Left ventricle myocardium superior (tissue), 1 donor: ENCODE measurements at regions of chr6 and their contacts with region 1.

Region 1: GRCh38 chr6:155530219-155530834 is 74.7 kb upstream of the NOX3 start:
- DNase-seq: no peak
- ATAC-seq: no peak

Region 2: DNA sequence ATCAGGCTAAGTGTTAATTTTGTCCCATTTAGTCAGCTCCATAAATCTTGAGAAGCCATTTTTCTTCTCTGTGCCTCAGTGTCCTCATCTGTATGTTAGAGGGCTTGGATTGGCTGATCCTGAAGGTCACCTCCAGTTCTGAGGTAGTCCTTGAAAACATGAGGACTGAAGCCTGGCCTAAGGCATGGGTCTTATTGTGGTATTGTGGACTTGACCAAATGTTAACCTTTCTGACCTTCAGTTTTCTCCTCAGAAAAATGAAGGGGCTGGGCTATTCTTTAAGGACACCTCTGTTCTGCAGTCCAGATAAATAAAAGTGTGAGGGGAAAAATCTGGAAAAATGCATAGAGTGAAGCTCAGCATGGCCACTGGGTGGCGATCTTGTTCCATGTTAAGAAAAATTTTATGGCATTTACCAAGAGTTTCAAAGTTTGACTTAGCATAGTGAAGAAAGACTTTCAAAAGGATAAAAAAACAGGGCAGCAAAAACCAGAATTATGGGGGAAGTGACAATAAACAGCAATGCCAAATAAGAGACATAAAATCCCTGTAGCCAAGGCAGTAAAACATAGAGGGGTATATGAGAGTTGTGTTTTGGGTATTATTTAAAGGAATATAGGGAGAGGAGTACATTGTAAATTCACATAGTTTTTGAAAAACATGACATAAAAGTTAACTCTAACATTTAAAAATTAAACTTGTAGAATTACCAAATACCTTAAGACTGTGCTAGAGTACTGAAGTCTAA is 202.8 kb before region 1 on chr6:
- intact Hi-C with region 1: loop called (anchors 5 kb)
- DNase-seq: peak; percentile 36
- ATAC-seq: peak; percentile 55